Heart right ventricle (tissue), 16 donors: ENCODE measurements at regions of chrX and their contacts with region 1.

Region 1: DNA sequence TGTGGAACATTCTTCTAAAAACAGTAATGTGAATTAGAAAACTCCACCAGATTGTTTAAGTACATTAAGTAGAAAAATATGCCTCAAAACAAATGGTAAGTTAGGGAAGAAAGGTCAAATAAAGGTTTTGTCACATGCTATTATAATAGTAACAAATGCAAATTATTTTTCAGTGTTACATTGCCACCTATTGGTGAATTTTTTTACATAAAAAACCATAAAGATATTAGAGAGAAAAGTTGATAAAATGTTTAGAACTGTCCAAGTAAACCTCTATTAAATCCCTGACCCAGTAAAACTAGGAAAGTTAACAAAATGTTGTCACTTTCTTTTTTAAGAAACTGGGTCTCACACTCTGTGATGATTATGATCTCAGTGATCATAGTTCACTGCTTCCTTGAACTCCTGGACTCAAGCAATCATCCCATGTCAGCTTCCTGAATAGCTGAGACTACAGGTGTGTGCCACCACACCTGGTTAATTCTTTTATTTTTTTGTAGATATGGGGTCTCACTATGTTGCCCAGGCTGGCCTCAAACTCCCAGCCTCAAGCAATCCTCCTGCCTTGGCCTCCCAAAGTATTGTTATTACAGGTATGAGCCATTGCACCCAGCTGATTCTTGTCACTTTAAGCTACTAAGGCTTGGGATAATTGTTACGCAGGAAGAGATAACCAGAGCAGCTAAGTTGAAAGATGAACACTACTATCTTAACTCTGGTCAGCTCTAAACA is 157.6 kb downstream of the ATRX start:
- DNase-seq: no peak
- ATAC-seq: no peak
- H3K4me3 ChIP-seq: no peak overlapping the region
- H3K27ac ChIP-seq: no peak overlapping the region
- H3K4me1 ChIP-seq: no peaks in the 10 kb centered on the region
- H3K27me3 ChIP-seq: peaks cover 0 to 12% (median 0%) of the 10 kb centered on the region in 7 donors
- CTCF ChIP-seq: peak in 5 of 9 donors; percentile 5 to 20 (median 18)

Region 2: DNA sequence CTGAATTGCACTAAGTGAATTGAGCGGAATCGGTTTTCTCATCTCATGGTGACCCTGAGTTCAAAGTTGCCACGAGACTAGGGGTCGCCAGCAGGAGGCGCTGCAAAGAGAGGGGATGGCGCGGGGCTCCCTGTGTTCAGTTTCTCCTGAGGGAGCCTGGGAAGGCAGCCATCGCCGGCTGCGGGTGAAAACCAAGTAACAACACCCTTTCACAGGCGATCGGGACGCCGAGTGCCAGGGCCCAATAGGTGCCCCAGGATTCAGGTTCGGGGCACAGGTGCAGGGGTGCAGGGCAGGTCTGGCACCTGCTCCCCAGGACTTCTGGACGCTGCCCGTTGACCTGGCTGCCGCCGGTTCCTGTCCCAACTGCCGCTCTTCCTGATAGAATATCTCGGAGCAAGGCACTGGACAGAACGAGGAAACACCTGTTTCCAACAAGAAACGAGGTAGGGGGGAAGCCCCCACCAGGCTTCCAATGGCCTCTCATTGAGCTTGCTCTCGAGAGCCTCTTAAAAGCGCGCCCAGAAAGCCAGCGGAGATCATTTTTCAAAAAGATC is 182.4 kb before region 1 on chrX:
- intact Hi-C with region 1: loop called in 1 of 10 experiments (anchors 5 kb)
- DNase-seq: peak in 1 of 2 donors; percentile 15
- ATAC-seq: peak in 4 of 8 donors; percentile 27 to 38 (median 34)
- H3K4me3 ChIP-seq: peak overlapping the region; percentile 17 to 53 (median 38)
- H3K27ac ChIP-seq: peak overlapping the region in 1 of 10 donors; percentile 4
- H3K4me1 ChIP-seq: peaks cover 0 to 22% (median 13%) of the 10 kb centered on the region in 9 donors
- H3K27me3 ChIP-seq: peaks cover 0 to 63% (median 0%) of the 10 kb centered on the region in 7 donors
- CTCF ChIP-seq: peak in 6 of 9 donors; percentile 30 to 48 (median 34)

Region 3: DNA sequence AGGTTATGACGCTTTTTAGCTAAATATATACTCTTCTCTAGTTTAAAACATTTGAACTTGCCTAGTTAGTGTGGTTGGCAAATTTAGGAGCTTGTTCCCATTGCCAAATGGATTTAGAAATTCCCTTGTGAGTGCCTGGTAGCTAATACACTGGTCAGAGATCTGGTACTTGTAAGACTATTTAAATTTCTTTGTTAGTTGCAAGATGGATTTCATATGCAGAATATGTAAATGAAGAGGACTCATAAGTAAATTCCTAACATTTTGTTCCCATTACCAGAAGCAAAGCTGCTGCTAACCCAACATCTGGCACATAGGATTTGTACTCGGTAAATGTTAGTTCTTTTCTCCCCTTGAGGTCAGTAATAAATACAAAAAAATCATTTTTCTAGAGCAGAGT is 419.6 kb after region 1 on chrX:
- intact Hi-C with region 1: no loop called
- DNase-seq: no peak
- ATAC-seq: no peak
- H3K4me3 ChIP-seq: no peak overlapping the region
- H3K27ac ChIP-seq: no peak overlapping the region
- H3K4me1 ChIP-seq: no peaks in the 10 kb centered on the region
- H3K27me3 ChIP-seq: no peaks in the 10 kb centered on the region
- CTCF ChIP-seq: no peak